ENCODE measurements at regions of chr16 and their contacts with region 1.

Region 1: DNA sequence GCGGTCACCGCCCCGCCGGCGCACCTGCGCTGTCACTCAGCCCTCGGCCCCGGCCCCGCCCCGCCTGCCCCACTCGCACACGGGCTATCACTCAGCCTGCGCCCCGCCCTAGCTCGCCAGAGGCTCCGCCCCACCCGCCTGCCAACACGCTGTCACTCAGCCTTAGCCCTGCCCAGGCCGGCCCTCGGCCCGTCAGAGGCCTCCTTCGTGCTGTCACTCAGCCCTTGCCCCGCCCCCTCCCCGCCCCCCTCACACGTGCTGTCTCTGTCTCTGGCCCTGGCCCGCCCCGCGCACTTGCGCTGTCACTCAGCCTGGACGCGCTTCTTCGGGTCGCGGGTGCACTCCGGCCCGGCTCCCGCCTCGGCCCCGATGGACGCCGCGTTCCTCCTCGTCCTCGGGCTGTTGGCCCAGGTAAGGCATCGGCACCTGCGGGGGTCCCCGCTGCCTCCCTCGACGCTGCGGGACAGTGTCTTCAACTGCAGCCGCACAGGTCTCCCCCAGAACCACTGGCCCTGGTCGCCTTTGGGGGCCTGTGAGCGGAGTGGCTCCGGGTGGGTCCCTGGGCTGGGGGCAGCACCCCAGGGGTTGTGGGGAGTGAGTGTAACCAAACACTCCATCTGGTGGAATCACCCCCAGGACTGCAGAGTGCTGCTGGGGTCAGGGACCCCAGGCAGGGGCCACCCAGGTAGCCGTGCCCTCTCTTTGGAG is at the start of gene CDH15:
- DNase-seq: peak; percentile 94
- ATAC-seq: peak; percentile 73
- H3K4me3 ChIP-seq: peak within 1 kb of the TSS in 2 of 3 experiments; percentile 30 to 69; a peak in 3 of 6 replicates
- H3K27ac ChIP-seq: no peak within 1 kb of the TSS
- H3K4me1 ChIP-seq: peaks cover 69% of the 10 kb centered on the region
- H3K27me3 ChIP-seq: peaks cover 57 to 89% of the 10 kb centered on the region in 2 experiments
- CTCF ChIP-seq: no peak
- EP300 ChIP-seq: no peak
- POLR2A ChIP-seq: no peak
- RAD21 ChIP-seq: peak; percentile 39; the same call in 1 of the 2 replicates
- total RNA-seq, gene CDH15: 1.4 and 2.2 TPM in 2 replicates

Region 2: DNA sequence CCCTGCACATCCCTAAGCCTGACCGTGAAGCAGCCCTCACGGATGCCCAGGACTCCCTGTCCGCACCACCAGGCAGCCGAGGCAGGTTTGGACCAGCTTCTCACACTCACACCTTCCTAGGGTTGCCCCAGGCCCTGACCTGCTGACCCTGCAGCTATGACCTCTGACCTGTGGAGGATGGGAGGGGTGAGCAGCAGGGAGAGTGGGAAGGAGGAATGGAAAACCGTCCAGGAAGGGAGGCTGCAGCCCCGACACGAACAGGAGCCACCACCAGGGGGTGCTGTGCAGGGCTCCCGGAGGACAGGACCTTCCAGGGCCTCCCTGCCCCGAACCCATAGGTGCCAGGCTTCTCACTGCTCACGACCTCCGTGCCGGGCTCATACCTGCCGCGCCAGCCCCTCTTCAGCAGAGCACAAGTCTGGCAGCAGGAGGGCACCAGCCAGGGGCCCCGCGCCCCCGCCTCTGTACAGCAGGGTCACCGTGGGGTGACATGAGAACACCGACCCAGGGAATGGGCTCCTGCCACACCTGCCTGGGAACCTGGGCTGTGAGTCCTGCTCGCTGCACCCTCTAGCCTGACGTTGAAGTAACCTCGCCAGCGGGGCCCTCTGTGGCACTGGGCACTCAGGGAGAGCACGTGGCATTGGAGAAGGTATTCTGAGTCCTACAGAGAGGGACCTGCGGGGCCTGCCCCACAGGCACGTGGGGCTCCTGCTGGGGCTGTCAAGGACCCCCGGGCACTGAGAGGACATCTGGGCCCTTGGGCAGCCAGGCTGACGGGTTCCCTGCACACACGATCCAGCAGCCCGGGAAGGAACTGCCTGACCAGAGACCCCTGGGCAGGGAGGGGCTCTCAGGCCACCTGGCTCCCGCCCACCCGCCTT is 427.7 kb before region 1 on chr16:
- CTCF ChIA-PET with region 1: interaction called, 10 read pairs
- POLR2A ChIA-PET with region 1: no interaction called
- in situ Hi-C with region 1: no loop called
- intact Hi-C with region 1: loop called (anchors 5 kb)
- DNase-seq: peak; percentile 60
- ATAC-seq: peak; percentile 77
- H3K4me3 ChIP-seq: no peak overlapping the region
- H3K27ac ChIP-seq: no peak overlapping the region
- H3K4me1 ChIP-seq: no peaks in the 10 kb centered on the region
- H3K27me3 ChIP-seq: no peaks in the 10 kb centered on the region; a peak in 1 of 5 replicates
- CTCF ChIP-seq: peak; percentile 95
- EP300 ChIP-seq: no peak
- POLR2A ChIP-seq: no peak
- RAD21 ChIP-seq: peak; percentile 84

Region 3: DNA sequence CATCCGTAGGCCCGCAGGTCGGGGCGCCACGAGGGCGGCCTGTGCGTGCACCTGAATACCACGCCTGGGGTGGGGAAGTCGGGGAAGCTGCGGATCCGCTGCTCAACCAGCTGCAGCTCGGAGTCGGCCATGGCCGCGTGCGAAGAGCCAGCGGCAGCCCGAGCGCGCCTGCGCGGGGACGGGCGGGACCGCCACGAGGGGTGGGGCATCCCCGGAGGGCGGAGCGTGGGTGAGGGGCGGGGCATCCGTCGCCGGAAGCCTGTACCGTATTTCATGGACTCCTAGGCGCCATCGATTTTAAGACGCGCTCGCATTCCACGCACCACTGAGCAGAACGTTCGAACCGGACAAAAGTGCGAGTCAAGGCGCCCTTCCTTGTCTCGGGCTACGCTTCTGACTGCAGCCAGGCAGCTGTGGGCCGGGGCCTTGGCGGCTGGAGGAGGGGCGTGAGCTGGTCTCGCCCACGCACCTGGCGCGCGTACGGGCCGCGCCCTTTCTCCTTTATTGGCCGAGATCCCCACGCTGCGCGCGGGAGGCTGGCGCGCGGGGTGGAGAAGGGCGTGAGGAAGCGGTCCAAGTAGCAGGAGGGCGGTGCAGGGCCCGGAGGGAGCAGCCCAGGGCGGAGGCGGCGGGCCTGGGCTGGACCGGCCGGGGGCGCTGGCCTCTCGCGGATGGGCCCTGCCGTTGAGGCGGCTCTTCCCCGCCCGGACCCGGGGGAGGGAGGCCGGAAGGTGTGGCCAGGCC is 359.7 kb before region 1 on chr16 and contains the start of gene APRT:
- CTCF ChIA-PET with region 1: interaction called, 4 read pairs
- POLR2A ChIA-PET with region 1: interaction called, 3 read pairs
- in situ Hi-C with region 1: loop called (anchors 5 kb)
- intact Hi-C with region 1: loop called (anchors 5 kb)
- DNase-seq: peak; percentile 83
- ATAC-seq: peak; percentile 65
- H3K4me3 ChIP-seq: peak within 1 kb of the TSS; percentile 72 to 90 (median 74)
- H3K27ac ChIP-seq: peak within 1 kb of the TSS; percentile 76
- H3K4me1 ChIP-seq: peaks cover 33% of the 10 kb centered on the region
- H3K27me3 ChIP-seq: no peaks in the 10 kb centered on the region; a peak in 1 of 5 replicates
- CTCF ChIP-seq: peak; percentile 55
- EP300 ChIP-seq: no peak
- POLR2A ChIP-seq: peak in 1 of 2 experiments; percentile 94; a peak in 2 of 4 replicates
- RAD21 ChIP-seq: peak; percentile 76
- total RNA-seq, gene APRT: 242 and 274 TPM in 2 replicates

Region 4: GRCh38 chr16:88925101-88925887 is 246.3 kb before region 1 on chr16:
- CTCF ChIA-PET with region 1: interaction called, 7 read pairs
- POLR2A ChIA-PET with region 1: no interaction called
- in situ Hi-C with region 1: no loop called
- intact Hi-C with region 1: loop called (anchors 5 kb)
- DNase-seq: peak; percentile 70
- ATAC-seq: peak; percentile 81
- H3K4me3 ChIP-seq: peak overlapping the region in 1 of 3 experiments; percentile 35; a peak in 1 of 6 replicates
- H3K27ac ChIP-seq: no peak overlapping the region
- H3K4me1 ChIP-seq: peaks cover 67% of the 10 kb centered on the region
- H3K27me3 ChIP-seq: peaks cover 39 to 78% of the 10 kb centered on the region in 2 experiments
- CTCF ChIP-seq: peak; percentile 76
- EP300 ChIP-seq: no peak
- POLR2A ChIP-seq: no peak
- RAD21 ChIP-seq: peak; percentile 74

Region 5: GRCh38 chr16:89187155-89188041 is 15.8 kb after region 1 on chr16:
- CTCF ChIA-PET with region 1: no interaction called
- POLR2A ChIA-PET with region 1: interaction called, 10 read pairs
- in situ Hi-C with region 1: no loop called
- intact Hi-C with region 1: loop called (anchors 1 kb)
- DNase-seq: no peak
- ATAC-seq: peak; percentile 4
- H3K4me3 ChIP-seq: no peak overlapping the region
- H3K27ac ChIP-seq: peak overlapping the region; percentile 11
- H3K4me1 ChIP-seq: peaks cover 51% of the 10 kb centered on the region
- H3K27me3 ChIP-seq: peaks cover 0 to 30% of the 10 kb centered on the region in 2 experiments; a peak in 4 of 5 replicates
- CTCF ChIP-seq: peak; percentile 43
- EP300 ChIP-seq: no peak
- POLR2A ChIP-seq: no peak
- RAD21 ChIP-seq: no peak

Region 6: GRCh38 chr16:89201439-89202377 is 30.1 kb after region 1 on chr16:
- CTCF ChIA-PET with region 1: no interaction called
- POLR2A ChIA-PET with region 1: interaction called, 10 read pairs
- in situ Hi-C with region 1: no loop called
- intact Hi-C with region 1: no loop called
- DNase-seq: peak; percentile 78
- ATAC-seq: peak; percentile 32
- H3K4me3 ChIP-seq: peak overlapping the region; percentile 62 to 99 (median 92)
- H3K27ac ChIP-seq: peak overlapping the region; percentile 82
- H3K4me1 ChIP-seq: peaks cover 33% of the 10 kb centered on the region
- H3K27me3 ChIP-seq: no peaks in the 10 kb centered on the region; a peak in 1 of 5 replicates
- CTCF ChIP-seq: no peak
- EP300 ChIP-seq: no peak
- POLR2A ChIP-seq: peak in 1 of 2 experiments; percentile 91; a peak in 2 of 4 replicates
- RAD21 ChIP-seq: peak; percentile 76

Region 7: GRCh38 chr16:89863741-89864306 is 692.2 kb after region 1 on chr16:
- CTCF ChIA-PET with region 1: no interaction called
- POLR2A ChIA-PET with region 1: no interaction called
- in situ Hi-C with region 1: no loop called
- intact Hi-C with region 1: no loop called
- DNase-seq: no peak
- ATAC-seq: no peak
- H3K4me3 ChIP-seq: no peak overlapping the region
- H3K27ac ChIP-seq: no peak overlapping the region
- H3K4me1 ChIP-seq: 0 out of 2 replicates have a peak, but pooled peaks cover 4% of the 10 kb centered on the region
- H3K27me3 ChIP-seq: no peaks in the 10 kb centered on the region
- CTCF ChIP-seq: no peak
- EP300 ChIP-seq: no peak
- POLR2A ChIP-seq: no peak
- RAD21 ChIP-seq: no peak

Measured in HepG2 (cell line).